Naive thymus-derived CD4-positive, alpha-beta T cell (primary cell): ENCODE measurements at regions of chr20 and their contacts with region 1.

Region 1: GRCh38 chr20:45798935-45799642 is 7.3 kb downstream of the DNTTIP1 start:
- DNase-seq: peak; percentile 25 to 70 (median 58)
- ATAC-seq: peak; percentile 96
- H3K4me3 ChIP-seq: no peak overlapping the region
- H3K4me3 Mint-ChIP-seq: no peak overlapping the region
- H3K27ac ChIP-seq: peak overlapping the region; percentile 24
- H3K27ac Mint-ChIP-seq: peak overlapping the region in 8 of 9 donors; percentile 1 to 92 (median 52)
- H3K4me1 ChIP-seq: peaks cover 4 to 7% of the 10 kb centered on the region in 2 donors
- H3K4me1 Mint-ChIP-seq: peaks cover 9 to 21% (median 11%) of the 10 kb centered on the region in 7 donors
- H3K27me3 ChIP-seq: no peaks in the 10 kb centered on the region
- H3K27me3 Mint-ChIP-seq: no peaks in the 10 kb centered on the region

Region 2: GRCh38 chr20:45254869-45255266 is 544.2 kb before region 1 on chr20:
- CTCF ChIA-PET with region 1: no interaction called
- POLR2A ChIA-PET with region 1: no interaction called
- intact Hi-C with region 1: no loop called
- DNase-seq: no peak
- ATAC-seq: peak; percentile 37
- H3K4me3 ChIP-seq: no peak overlapping the region
- H3K4me3 Mint-ChIP-seq: no peak overlapping the region
- H3K27ac ChIP-seq: no peak overlapping the region
- H3K27ac Mint-ChIP-seq: no peak overlapping the region
- H3K4me1 ChIP-seq: no peaks in the 10 kb centered on the region
- H3K4me1 Mint-ChIP-seq: peaks cover 0 to 7% (median 0%) of the 10 kb centered on the region in 7 donors
- H3K27me3 ChIP-seq: no peaks in the 10 kb centered on the region
- H3K27me3 Mint-ChIP-seq: peaks cover 28 to 54% (median 33%) of the 10 kb centered on the region in 5 donors

Region 3: GRCh38 chr20:45636513-45636912 is 162.6 kb before region 1 on chr20:
- CTCF ChIA-PET with region 1: no interaction called
- POLR2A ChIA-PET with region 1: no interaction called
- intact Hi-C with region 1: no loop called
- DNase-seq: no peak
- ATAC-seq: no peak
- H3K4me3 ChIP-seq: no peak overlapping the region
- H3K4me3 Mint-ChIP-seq: no peak overlapping the region
- H3K27ac ChIP-seq: no peak overlapping the region
- H3K27ac Mint-ChIP-seq: no peak overlapping the region
- H3K4me1 ChIP-seq: no peaks in the 10 kb centered on the region
- H3K4me1 Mint-ChIP-seq: no peaks in the 10 kb centered on the region
- H3K27me3 ChIP-seq: peaks cover 0 to 3% of the 10 kb centered on the region in 2 donors
- H3K27me3 Mint-ChIP-seq: peaks cover 15 to 26% (median 23%) of the 10 kb centered on the region in 5 donors

Region 4: DNA sequence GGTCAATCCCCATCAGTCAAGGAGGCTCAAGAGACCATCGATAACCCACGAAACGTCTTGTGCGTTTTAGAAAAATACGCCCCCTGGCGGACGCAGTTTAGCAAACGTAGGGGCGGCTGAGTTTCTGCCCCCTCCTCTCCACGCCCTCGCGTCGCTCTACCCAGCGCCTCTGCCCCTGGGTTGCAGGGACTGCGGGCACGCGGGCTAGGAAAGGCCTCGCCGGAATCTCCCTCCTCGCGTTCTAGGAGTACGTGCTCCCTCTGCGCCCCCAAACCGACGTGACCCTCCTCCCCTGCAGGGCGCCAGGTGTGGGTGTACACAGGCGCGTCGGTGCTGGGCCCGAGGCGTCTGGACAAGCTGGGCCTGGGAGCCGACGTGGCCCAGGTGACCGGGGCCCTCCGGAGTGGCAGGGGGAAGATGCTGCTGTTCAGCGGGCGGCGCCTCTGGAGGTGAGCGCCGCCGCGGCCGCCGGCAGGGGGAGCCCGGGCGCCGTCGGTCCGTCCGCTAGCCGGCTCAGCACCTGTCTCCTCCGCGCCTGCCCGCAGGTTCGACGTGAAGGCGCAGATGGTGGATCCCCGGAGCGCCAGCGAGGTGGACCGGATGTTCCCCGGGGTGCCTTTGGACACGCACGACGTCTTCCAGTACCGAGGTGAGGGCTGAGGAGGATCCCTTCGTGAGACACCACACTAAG is 214.9 kb after region 1 on chr20:
- CTCF ChIA-PET with region 1: no interaction called
- POLR2A ChIA-PET with region 1: no interaction called
- intact Hi-C with region 1: loop called in 1 of 2 experiments (anchors 1 kb)
- DNase-seq: peak; percentile 39 to 73 (median 60)
- ATAC-seq: peak; percentile 76
- H3K4me3 ChIP-seq: peak overlapping the region; percentile 32
- H3K4me3 Mint-ChIP-seq: peak overlapping the region; percentile 23 to 76 (median 58)
- H3K27ac ChIP-seq: no peak overlapping the region
- H3K27ac Mint-ChIP-seq: peak overlapping the region in 3 of 9 donors; percentile 1 to 43 (median 29)
- H3K4me1 ChIP-seq: peaks cover 24 to 27% of the 10 kb centered on the region in 2 donors
- H3K4me1 Mint-ChIP-seq: peaks cover 38 to 61% (median 48%) of the 10 kb centered on the region in 7 donors
- H3K27me3 ChIP-seq: peaks cover 15 to 16% of the 10 kb centered on the region in 2 donors
- H3K27me3 Mint-ChIP-seq: peaks cover 52 to 68% (median 55%) of the 10 kb centered on the region in 5 donors

Region 5: GRCh38 chr20:46351357-46352058 is 552.4 kb after region 1 on chr20:
- CTCF ChIA-PET with region 1: no interaction called
- POLR2A ChIA-PET with region 1: no interaction called
- intact Hi-C with region 1: no loop called
- DNase-seq: no peak
- ATAC-seq: no peak
- H3K4me3 ChIP-seq: no peak overlapping the region
- H3K4me3 Mint-ChIP-seq: no peak overlapping the region
- H3K27ac ChIP-seq: no peak overlapping the region
- H3K27ac Mint-ChIP-seq: peak overlapping the region in 8 of 9 donors; percentile 28 to 81 (median 61)
- H3K4me1 ChIP-seq: peaks cover 2 to 3% of the 10 kb centered on the region in 2 donors
- H3K4me1 Mint-ChIP-seq: peaks cover 19 to 32% (median 29%) of the 10 kb centered on the region in 7 donors
- H3K27me3 ChIP-seq: no peaks in the 10 kb centered on the region
- H3K27me3 Mint-ChIP-seq: no peaks in the 10 kb centered on the region